ENCODE measurements at regions of chr15 and their contacts with region 1.

Region 1: GRCh38 chr15:73873889-73874511 is 636 bp downstream of the TBC1D21 start:
- DNase-seq: peak; percentile 60
- H3K4me3 ChIP-seq: no peak overlapping the region
- H3K27ac ChIP-seq: no peak overlapping the region
- H3K4me1 ChIP-seq: peaks cover 8% of the 10 kb centered on the region
- H3K27me3 ChIP-seq: peaks cover 11 to 14% of the 10 kb centered on the region in 2 experiments
- CTCF ChIP-seq: peak; percentile 49 to 52
- POLR2A ChIP-seq: no peak

Region 2: GRCh38 chr15:73849641-73850040 is 24.4 kb before region 1 on chr15:
- CTCF ChIA-PET with region 1: interaction called, 11 read pairs
- POLR2A ChIA-PET with region 1: no interaction called
- dilution Hi-C with region 1: no loop called
- intact Hi-C with region 1: no loop called
- DNase-seq: no peak
- H3K4me3 ChIP-seq: no peak overlapping the region
- H3K27ac ChIP-seq: no peak overlapping the region
- H3K4me1 ChIP-seq: no peaks in the 10 kb centered on the region
- H3K27me3 ChIP-seq: peaks cover 0 to 1% of the 10 kb centered on the region in 2 experiments
- CTCF ChIP-seq: no peak
- POLR2A ChIP-seq: no peak

Region 3: DNA sequence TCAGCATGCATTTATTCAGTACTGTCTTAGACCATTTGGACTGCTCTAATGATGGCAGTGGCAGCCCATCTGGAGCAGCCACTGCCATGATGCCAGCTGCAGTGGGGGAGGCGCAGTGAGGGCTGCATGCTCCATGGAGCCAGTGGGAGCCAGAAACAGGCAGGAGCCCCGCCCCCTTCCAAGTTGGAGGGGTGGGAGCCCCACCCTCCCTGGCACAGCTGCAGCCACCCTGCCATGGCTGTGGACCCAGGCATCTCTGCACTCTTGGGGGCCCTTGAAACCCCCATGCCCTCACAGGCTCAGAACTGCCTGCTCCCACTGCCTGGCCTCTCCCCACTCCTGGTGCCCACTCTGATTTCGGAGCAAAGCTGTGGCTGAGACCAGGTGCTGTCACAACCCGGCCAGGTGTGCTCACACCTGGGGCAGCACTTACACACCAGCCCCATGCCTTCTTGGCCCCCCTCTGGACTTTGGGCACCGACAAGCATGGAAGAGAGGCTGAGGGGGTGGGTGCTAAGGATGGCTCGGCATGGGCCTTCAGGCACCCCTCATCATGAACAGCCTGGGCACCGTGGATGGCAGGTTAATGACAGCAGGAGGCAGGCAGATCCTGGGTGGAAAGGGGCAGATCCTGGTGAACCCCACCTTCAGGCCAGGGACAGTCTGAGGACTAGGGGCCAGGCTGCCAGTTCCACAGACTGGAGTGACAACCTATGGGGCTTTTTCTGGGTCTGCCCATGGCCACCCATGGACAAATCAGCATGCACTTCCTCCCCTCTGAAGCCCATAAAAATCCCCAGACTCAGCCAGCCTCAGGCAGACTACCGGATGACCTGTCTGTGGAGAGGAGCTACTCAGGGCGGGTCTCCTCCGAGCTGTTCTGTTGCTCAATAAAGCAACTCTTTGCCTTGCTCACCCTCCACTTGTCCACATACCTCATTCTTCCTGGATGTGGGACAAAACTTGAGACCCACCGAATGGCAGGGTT is 17.6 kb after region 1 on chr15:
- CTCF ChIA-PET with region 1: interaction called, 35 read pairs
- POLR2A ChIA-PET with region 1: no interaction called
- dilution Hi-C with region 1: no loop called
- intact Hi-C with region 1: no loop called
- DNase-seq: no peak
- H3K4me3 ChIP-seq: no peak overlapping the region
- H3K27ac ChIP-seq: no peak overlapping the region
- H3K4me1 ChIP-seq: no peaks in the 10 kb centered on the region
- H3K27me3 ChIP-seq: peaks cover 0 to under 1% of the 10 kb centered on the region in 2 experiments
- CTCF ChIP-seq: no peak
- POLR2A ChIP-seq: no peak

Region 4: GRCh38 chr15:73897441-73898261 is 23.7 kb after region 1 on chr15:
- CTCF ChIA-PET with region 1: interaction called, 35 read pairs
- POLR2A ChIA-PET with region 1: no interaction called
- dilution Hi-C with region 1: no loop called
- intact Hi-C with region 1: no loop called
- DNase-seq: peak; percentile 65
- H3K4me3 ChIP-seq: no peak overlapping the region
- H3K27ac ChIP-seq: no peak overlapping the region
- H3K4me1 ChIP-seq: no peaks in the 10 kb centered on the region
- H3K27me3 ChIP-seq: peaks cover 0 to 1% of the 10 kb centered on the region in 2 experiments
- CTCF ChIP-seq: peak; percentile 90 to 96
- POLR2A ChIP-seq: no peak

Region 5: GRCh38 chr15:73908030-73908821 is 34.2 kb after region 1 on chr15:
- CTCF ChIA-PET with region 1: interaction called, 239 read pairs
- POLR2A ChIA-PET with region 1: no interaction called
- dilution Hi-C with region 1: no loop called
- intact Hi-C with region 1: loop called (anchors 1 kb)
- DNase-seq: peak; percentile 63
- H3K4me3 ChIP-seq: no peak overlapping the region
- H3K27ac ChIP-seq: no peak overlapping the region
- H3K4me1 ChIP-seq: no peaks in the 10 kb centered on the region
- H3K27me3 ChIP-seq: peaks cover 0 to 10% of the 10 kb centered on the region in 2 experiments
- CTCF ChIP-seq: peak; percentile 92 to 95
- POLR2A ChIP-seq: no peak

Region 6: GRCh38 chr15:73927476-73928240 is 53.7 kb after region 1 on chr15:
- CTCF ChIA-PET with region 1: interaction called, 14 read pairs
- POLR2A ChIA-PET with region 1: no interaction called
- dilution Hi-C with region 1: no loop called
- intact Hi-C with region 1: no loop called
- DNase-seq: peak; percentile 45
- H3K4me3 ChIP-seq: peak overlapping the region in 1 of 3 experiments; percentile 45
- H3K27ac ChIP-seq: no peak overlapping the region
- H3K4me1 ChIP-seq: peaks cover 24% of the 10 kb centered on the region
- H3K27me3 ChIP-seq: no peaks in the 10 kb centered on the region
- CTCF ChIP-seq: peak; percentile 28 to 51
- POLR2A ChIP-seq: no peak

Region 7: GRCh38 chr15:73964736-73965093 is 90.7 kb after region 1 on chr15:
- CTCF ChIA-PET with region 1: interaction called, 46 read pairs
- POLR2A ChIA-PET with region 1: no interaction called
- dilution Hi-C with region 1: no loop called
- intact Hi-C with region 1: loop called (anchors 2 kb)
- DNase-seq: peak; percentile 83
- H3K4me3 ChIP-seq: no peak overlapping the region
- H3K27ac ChIP-seq: no peak overlapping the region
- H3K4me1 ChIP-seq: peaks cover 20% of the 10 kb centered on the region
- H3K27me3 ChIP-seq: no peaks in the 10 kb centered on the region
- CTCF ChIP-seq: peak; percentile 95 to 98
- POLR2A ChIP-seq: no peak

Measured in endothelial cell of umbilical vein (primary cell).